ENCODE measurements at regions of chr1 and their contacts with region 1.

Region 1: DNA sequence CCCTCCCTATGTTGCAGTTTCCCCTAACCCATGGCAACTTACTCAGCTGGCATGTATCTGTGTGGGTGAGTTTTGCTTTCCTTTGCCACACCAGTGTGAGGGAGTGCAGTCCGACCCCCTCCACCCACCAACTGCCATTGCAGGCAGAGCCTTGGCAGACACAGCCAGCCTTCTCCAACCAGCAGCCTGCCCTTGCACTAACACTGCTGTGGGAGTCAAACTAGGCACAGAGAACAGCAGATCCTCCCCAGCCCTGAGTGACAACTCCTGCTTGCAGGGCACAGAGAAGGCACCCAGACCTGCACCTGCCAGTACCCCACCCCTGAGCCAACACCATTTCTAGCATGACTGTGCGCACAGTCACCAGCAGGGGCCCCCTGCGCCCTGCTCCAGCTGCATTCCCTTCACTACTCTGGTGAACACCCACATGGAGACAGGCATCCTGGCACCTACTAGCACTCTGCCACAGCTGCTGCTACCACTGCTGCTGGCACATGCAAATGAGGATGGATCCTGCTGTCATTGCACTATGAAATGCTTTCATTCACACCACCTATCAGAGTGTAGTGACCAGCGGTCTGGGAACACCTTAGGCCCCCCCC is 98.4 kb downstream of the MAGI3 start:
- DNase-seq: peak; percentile 13
- ATAC-seq: peak; percentile 93
- H3K4me3 ChIP-seq: no peak overlapping the region
- H3K27ac ChIP-seq: no peak overlapping the region
- H3K4me1 ChIP-seq: no peaks in the 10 kb centered on the region
- H3K27me3 ChIP-seq: no peaks in the 10 kb centered on the region
- CTCF ChIP-seq: peak; percentile 70
- EP300 ChIP-seq: no peak
- POLR2A ChIP-seq: no peak
- RAD21 ChIP-seq: peak; percentile 71

Region 2: DNA sequence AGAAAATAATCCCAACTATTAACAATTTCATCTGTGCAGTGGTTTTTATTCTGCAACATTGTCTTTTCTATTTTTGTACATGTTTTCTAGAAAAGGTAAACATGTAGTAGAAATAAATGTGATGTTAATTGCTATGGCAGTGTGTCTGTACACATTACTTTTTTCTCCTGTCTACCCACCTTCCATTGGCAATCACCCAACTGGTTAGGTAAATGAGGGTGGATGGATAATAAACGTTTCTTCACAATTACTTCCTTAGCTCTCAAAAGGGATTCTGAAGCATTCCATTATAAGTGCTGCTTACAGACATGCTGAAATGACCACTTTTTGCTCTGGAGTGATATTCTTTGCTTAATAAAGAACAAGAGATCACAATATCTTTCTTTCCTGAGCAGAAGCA is 37.0 kb before region 1 on chr1:
- CTCF ChIA-PET with region 1: no interaction called
- POLR2A ChIA-PET with region 1: no interaction called
- in situ Hi-C with region 1: no loop called
- intact Hi-C with region 1: no loop called
- DNase-seq: no peak
- ATAC-seq: no peak
- H3K4me3 ChIP-seq: no peak overlapping the region
- H3K27ac ChIP-seq: no peak overlapping the region
- H3K4me1 ChIP-seq: peaks cover 13% of the 10 kb centered on the region
- H3K27me3 ChIP-seq: no peaks in the 10 kb centered on the region
- CTCF ChIP-seq: no peak
- EP300 ChIP-seq: no peak
- POLR2A ChIP-seq: no peak
- RAD21 ChIP-seq: no peak

Region 3: DNA sequence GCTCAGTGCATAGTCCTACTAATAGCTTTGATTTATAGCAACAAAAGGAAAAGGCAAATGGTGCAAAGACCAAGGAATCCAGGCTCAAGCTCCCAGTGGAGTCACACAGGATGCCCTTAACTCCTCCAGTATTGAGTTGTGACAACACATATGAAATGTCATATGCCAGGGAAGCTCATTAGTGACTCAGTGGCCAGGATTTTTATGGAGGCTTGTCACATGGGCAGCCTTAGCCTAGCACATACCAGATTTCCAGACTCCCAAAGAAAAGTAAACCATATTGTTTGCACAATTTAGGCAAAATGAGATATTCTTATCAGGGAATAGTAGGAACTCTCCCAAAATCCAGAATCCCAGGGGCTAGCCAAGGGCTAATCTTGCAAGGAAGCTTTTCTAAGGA is 30.9 kb after region 1 on chr1:
- CTCF ChIA-PET with region 1: no interaction called
- POLR2A ChIA-PET with region 1: no interaction called
- in situ Hi-C with region 1: no loop called
- intact Hi-C with region 1: no loop called
- DNase-seq: peak; percentile 30
- ATAC-seq: no peak
- H3K4me3 ChIP-seq: no peak overlapping the region
- H3K27ac ChIP-seq: no peak overlapping the region
- H3K4me1 ChIP-seq: peaks cover 51% of the 10 kb centered on the region
- H3K27me3 ChIP-seq: no peaks in the 10 kb centered on the region; a peak in 1 of 5 replicates
- CTCF ChIP-seq: no peak
- EP300 ChIP-seq: no peak
- POLR2A ChIP-seq: no peak
- RAD21 ChIP-seq: no peak

Region 4: GRCh38 chr1:113660088-113660487 is 171.4 kb after region 1 on chr1:
- CTCF ChIA-PET with region 1: no interaction called
- POLR2A ChIA-PET with region 1: no interaction called
- in situ Hi-C with region 1: loop called (anchors 25 kb)
- intact Hi-C with region 1: no loop called
- DNase-seq: no peak
- ATAC-seq: no peak
- H3K4me3 ChIP-seq: no peak overlapping the region
- H3K27ac ChIP-seq: no peak overlapping the region
- H3K4me1 ChIP-seq: no peaks in the 10 kb centered on the region
- H3K27me3 ChIP-seq: no peaks in the 10 kb centered on the region
- CTCF ChIP-seq: no peak
- EP300 ChIP-seq: no peak
- POLR2A ChIP-seq: no peak
- RAD21 ChIP-seq: no peak

Measured in HepG2 (cell line).